Thyroid gland (tissue), 4 donors: ENCODE measurements at regions of chr3 and their contacts with region 1.

Region 1: DNA sequence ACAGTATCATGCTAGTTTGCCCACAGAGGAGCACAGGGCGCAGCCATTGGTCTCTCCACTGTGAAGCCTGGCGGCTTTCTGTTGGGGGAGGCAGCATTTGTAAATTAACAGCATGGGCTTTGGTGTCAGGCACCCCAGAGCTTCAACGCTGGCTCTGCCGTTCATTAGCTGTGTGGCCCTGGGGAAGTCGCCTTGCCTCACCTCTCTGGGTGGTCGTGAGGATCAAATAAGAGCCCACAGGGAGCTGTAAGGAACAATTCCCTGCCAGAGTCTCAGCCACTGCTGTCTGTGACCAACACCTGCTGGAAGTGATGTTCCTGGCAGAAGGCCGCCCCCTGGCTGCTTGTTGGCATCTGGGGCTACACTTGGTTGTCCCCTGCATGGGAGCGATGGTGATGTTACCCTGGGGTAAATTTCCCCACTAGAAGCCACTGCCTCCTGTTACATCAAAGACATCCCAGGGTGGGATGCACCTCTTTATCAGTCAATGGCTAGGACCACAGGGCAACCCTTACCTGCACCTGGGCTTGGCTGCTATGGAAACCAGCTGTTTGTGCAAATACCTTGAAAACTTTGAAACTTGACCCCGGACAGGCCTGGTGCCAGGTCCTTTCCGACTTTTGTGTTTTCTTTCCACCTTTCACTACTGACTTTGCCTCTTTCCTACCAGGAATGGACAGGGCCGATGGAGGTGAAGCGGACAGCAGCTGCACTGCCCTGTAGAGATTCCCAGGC is 36.9 kb downstream of the DNASE1L3 start:
- DNase-seq: peak; percentile 88 to 94
- H3K4me3 ChIP-seq: no peak overlapping the region
- H3K27ac ChIP-seq: peak overlapping the region; percentile 71 to 85 (median 80)
- H3K4me1 ChIP-seq: peaks cover 32 to 47% of the 10 kb centered on the region in 2 donors
- H3K27me3 ChIP-seq: no peaks in the 10 kb centered on the region
- CTCF ChIP-seq: peak in 4 of 6 experiments; percentile 32 to 54 (median 40)
- POLR2A ChIP-seq: peak in 1 of 2 donors; percentile 26

Region 2: GRCh38 chr3:58008140-58009025 is 165.4 kb before region 1 on chr3 and contains the start of gene FLNB:
- intact Hi-C with region 1: loop called (anchors 5 kb)
- DNase-seq: peak; percentile 69 to 72
- H3K4me3 ChIP-seq: peak within 1 kb of the TSS; percentile 83 to 97 (median 94)
- H3K27ac ChIP-seq: peak within 1 kb of the TSS; percentile 81 to 97 (median 91)
- H3K4me1 ChIP-seq: peaks cover 37 to 43% of the 10 kb centered on the region in 2 donors
- H3K27me3 ChIP-seq: no peaks in the 10 kb centered on the region
- CTCF ChIP-seq: peak; percentile 58 to 98 (median 72)
- POLR2A ChIP-seq: peak; percentile 38 to 87
- total RNA-seq, gene FLNB: 164 to 258 (median 242) TPM

Region 3: DNA sequence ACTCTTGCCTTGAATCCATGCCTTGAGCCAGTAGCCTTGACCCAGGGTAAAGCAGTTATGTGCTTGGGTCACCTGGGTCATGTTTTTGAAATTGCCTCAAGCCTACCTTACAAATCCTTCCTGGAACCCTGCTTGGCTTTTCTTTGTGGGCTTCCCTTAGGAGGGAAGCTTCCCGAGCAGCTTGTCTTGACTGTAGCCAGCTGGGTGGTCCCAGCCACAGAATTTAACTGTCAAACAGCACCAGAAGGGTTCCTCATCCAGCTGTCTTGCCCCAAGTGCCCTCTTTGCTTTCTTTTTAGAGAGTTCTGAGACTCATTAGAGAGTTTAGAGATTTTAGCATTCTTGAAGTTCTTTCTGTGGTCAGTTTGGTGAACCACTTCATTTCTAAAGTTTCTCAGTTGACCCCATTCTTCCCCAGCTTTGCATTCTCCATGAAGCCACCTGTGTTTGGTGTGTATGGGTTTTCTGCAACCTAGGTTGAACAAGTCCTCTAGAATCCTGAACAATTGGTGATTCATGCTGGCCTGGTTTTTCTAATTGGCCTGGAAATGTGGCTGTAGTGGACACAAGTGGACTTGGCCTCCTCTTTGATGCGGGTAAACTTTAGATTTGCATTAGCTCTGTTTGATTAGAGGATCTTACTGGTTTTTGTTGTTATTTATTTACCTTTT is 132.0 kb before region 1 on chr3:
- intact Hi-C with region 1: no loop called
- DNase-seq: no peak
- H3K4me3 ChIP-seq: no peak overlapping the region
- H3K27ac ChIP-seq: peak overlapping the region; percentile 90 to 96 (median 93)
- H3K4me1 ChIP-seq: peaks cover 68 to 79% of the 10 kb centered on the region in 2 donors
- H3K27me3 ChIP-seq: no peaks in the 10 kb centered on the region
- CTCF ChIP-seq: no peak
- POLR2A ChIP-seq: no peak